ENCODE measurements at regions of chr11 and their contacts with region 1.

Region 1: GRCh38 chr11:62374801-62375200 is 37.6 kb downstream of the ASRGL1 start:
- DNase-seq: no peak
- ATAC-seq: no peak
- H3K4me3 ChIP-seq: no peak overlapping the region
- H3K27ac ChIP-seq: no peak overlapping the region
- H3K4me1 ChIP-seq: no peaks in the 10 kb centered on the region
- H3K27me3 ChIP-seq: no peaks in the 10 kb centered on the region

Region 2: GRCh38 chr11:62337303-62338181 is 37.3 kb before region 1 on chr11 and contains the start of gene ASRGL1:
- intact Hi-C with region 1: loop called in 1 of 2 experiments (anchors 5 kb)
- DNase-seq: peak; percentile 86 to 96
- ATAC-seq: peak; percentile 93
- H3K4me3 ChIP-seq: peak within 1 kb of the TSS; percentile 56 to 63
- H3K27ac ChIP-seq: no peak within 1 kb of the TSS
- H3K4me1 ChIP-seq: no peaks in the 10 kb centered on the region
- H3K27me3 ChIP-seq: no peaks in the 10 kb centered on the region
- total RNA-seq, gene ASRGL1: 7.3 to 10.8 TPM

Region 3: DNA sequence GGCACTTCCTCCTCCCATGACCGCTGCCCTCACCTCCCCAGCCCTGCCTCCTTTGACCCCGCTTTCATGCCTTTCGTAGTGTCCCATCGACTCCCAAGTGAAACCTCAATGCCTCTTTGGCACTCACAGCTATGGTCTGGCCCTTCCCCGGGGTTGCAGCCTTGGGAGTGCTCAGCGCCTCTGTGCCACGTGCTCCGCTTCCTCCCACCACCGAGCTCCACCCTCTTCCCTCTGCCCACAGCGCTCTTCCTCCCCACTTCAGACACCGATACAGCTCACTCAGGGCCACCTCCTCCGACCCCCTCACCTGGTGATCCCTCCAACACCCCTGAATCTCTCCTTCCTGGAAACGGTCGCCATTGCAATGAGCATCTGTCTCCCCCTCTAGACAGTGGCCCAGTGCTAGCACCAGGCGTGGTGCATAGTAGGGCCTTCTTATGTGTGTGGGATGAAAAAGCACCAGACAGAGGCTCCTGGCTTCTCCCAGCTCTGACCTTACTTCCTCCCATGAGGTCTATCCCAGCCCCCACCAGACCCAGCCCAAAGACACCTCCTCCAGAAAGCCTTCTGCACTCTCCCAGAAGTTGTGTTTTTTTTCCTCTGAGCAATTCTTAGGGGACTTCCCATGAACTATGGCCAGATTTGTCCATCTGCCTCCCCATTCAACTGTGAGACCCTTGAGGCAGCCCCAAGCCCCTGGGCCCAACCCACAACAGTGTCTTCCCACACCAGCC is 27.6 kb after region 1 on chr11:
- intact Hi-C with region 1: no loop called
- DNase-seq: peak; percentile 87 to 89
- ATAC-seq: peak; percentile 81
- H3K4me3 ChIP-seq: no peak overlapping the region
- H3K27ac ChIP-seq: peak overlapping the region; percentile 65 to 70
- H3K4me1 ChIP-seq: peaks cover 0 to 11% of the 10 kb centered on the region in 2 donors
- H3K27me3 ChIP-seq: no peaks in the 10 kb centered on the region

Region 4: DNA sequence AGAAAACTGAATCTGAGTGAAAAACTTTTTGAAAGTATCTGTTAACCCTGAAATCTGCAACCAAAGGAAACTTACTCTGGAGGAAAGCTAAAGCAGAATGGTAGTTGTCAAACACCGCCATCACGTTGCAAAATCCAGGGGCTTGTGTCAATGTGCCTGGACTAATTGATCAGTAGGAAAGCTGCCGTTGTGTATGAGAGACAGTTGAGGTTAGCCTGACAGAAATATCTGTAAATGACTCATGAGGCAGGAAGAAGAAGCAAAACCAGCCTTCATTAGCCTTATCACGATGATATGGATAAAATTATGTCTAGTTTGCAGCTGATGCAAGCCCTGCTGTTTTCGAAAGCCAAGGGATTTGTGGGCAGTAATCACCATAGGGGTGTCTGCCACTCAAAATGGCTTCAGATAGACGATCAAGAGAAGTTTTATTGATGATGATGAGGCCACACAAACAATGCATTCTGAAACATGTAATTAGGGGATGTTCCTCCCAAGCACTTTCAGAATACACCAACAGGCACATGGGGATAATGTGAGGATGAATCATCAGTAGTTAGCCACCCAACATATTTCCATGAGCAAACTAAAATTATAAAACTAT is 52.9 kb after region 1 on chr11:
- intact Hi-C with region 1: no loop called
- DNase-seq: no peak
- ATAC-seq: no peak
- H3K4me3 ChIP-seq: no peak overlapping the region
- H3K27ac ChIP-seq: no peak overlapping the region
- H3K4me1 ChIP-seq: no peaks in the 10 kb centered on the region
- H3K27me3 ChIP-seq: no peaks in the 10 kb centered on the region

Measured in aorta (tissue), 5 donors.